ENCODE measurements at regions of chr19 and their contacts with region 1.

Region 1: GRCh38 chr19:51570962-51571575 is at the start of gene ZNF175:
- DNase-seq: peak; percentile 68
- ATAC-seq: peak; percentile 93
- H3K4me3 Mint-ChIP-seq: peak within 1 kb of the TSS; percentile 96
- H3K27ac Mint-ChIP-seq: peak within 1 kb of the TSS; percentile 86
- H3K4me1 Mint-ChIP-seq: peaks cover 38% of the 10 kb centered on the region
- H3K27me3 Mint-ChIP-seq: no peaks in the 10 kb centered on the region
- CTCF ChIP-seq: no peak
- total RNA-seq, gene ZNF175: 20.6 and 23.6 TPM in 2 replicates

Region 2: DNA sequence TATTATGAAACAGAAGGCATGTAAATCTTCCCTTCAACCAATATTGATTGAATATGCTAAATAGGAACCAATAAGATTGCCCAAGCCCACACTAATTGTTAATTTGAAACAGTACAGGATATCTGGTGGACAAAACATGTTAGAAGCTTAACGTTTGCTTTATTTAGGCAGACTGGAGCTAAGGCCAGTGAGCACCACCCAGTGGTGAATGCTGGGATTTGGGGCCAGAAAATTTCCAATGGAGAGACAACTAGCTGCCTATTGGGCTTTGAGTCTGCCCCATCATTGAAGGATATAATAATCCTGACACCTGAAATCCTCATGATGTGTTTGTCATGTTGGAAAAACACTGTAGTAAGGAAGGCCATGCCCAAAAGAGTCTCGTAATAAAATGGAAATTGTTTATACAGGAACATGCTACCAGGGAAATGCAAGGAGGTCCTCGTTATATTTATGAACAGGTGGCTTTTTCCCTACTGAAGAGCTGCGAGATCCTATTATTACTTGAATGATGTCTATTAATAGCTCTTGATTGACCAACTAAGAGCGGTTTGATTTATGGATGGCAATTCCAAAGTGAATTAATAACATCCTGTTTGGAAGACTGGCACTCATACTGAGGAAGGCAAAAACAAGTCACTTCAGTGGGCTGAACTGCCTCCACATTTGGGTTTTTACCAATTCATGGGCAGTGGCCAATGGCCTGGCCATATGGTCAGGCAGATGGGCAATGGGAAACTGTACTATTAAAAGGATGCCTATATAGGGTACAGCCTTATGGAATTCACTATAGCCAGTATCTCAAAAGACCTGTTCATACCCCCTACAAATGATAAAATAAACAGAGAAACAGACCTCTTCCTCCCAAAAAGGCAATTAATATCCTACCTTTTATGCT is 311.5 kb before region 1 on chr19:
- CTCF ChIA-PET with region 1: no interaction called
- POLR2A ChIA-PET with region 1: no interaction called
- intact Hi-C with region 1: no loop called
- DNase-seq: no peak
- ATAC-seq: no peak
- H3K4me3 Mint-ChIP-seq: no peak overlapping the region
- H3K27ac Mint-ChIP-seq: no peak overlapping the region
- H3K4me1 Mint-ChIP-seq: peaks cover 7% of the 10 kb centered on the region
- H3K27me3 Mint-ChIP-seq: peaks cover 19% of the 10 kb centered on the region
- CTCF ChIP-seq: no peak

Region 3: GRCh38 chr19:51501594-51502263 is 69.3 kb before region 1 on chr19 and contains the start of gene SIGLEC12:
- CTCF ChIA-PET with region 1: no interaction called
- POLR2A ChIA-PET with region 1: no interaction called
- intact Hi-C with region 1: no loop called
- DNase-seq: no peak
- ATAC-seq: peak; percentile 14
- H3K4me3 Mint-ChIP-seq: peak within 1 kb of the TSS; percentile 39
- H3K27ac Mint-ChIP-seq: no peak within 1 kb of the TSS
- H3K4me1 Mint-ChIP-seq: peaks cover 11% of the 10 kb centered on the region
- H3K27me3 Mint-ChIP-seq: no peaks in the 10 kb centered on the region
- CTCF ChIP-seq: no peak
- total RNA-seq, gene SIGLEC12: not detected in 2 replicates

Region 4: DNA sequence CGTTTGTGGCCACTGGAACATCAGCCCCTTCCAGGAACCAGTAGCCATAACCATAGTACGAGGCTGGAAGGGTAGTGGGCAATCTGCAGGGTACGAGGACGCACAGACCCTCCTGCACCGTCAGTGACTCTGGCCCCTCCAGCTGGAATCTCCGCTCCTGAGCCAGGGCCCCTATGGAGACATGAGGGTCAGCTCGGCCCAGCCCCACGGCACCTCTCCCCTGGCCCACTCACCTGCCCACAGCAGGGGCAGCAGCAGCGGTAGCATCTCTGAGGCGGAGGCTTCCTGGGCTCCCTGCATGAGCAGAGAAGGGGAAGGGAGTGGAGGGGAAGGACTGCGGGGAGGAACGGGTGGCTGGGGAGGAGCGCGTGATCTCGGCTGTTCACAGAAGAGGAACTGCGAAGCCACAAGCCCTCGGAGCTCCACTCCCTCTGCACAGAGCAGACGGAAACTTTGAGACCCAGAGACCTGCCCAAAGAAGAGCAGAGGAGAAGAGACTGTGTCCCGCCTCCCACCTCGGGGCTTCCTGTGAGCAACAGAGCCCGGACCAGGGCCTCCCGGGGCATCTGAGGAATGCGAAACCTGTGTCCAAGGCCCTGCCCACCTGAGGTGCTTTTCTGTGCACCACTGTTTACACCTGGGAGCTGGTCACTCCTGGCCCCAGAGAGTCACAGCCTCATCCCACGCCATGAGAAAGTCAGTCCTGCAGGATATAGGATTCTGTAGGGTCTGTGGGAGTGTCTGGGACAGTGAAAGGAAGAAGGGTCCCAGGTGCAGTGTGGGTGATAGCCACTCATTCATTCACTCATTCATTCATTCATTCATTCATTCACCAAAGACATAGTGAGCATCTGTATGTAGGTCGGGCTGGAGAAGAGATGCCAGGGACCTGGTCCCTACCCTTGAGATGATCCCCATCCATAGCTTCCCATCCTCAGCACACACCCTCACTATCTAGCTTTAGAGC is 39.4 kb before region 1 on chr19 and contains the start of gene SIGLEC6:
- CTCF ChIA-PET with region 1: no interaction called
- POLR2A ChIA-PET with region 1: interaction called, 3 read pairs
- intact Hi-C with region 1: loop called (anchors 1 kb)
- DNase-seq: peak; percentile 60
- ATAC-seq: peak; percentile 97
- H3K4me3 Mint-ChIP-seq: peak within 1 kb of the TSS; percentile 83
- H3K27ac Mint-ChIP-seq: peak within 1 kb of the TSS; percentile 83
- H3K4me1 Mint-ChIP-seq: peaks cover 88% of the 10 kb centered on the region
- H3K27me3 Mint-ChIP-seq: no peaks in the 10 kb centered on the region
- CTCF ChIP-seq: no peak
- total RNA-seq, gene SIGLEC6: 16.4 and 28.7 TPM in 2 replicates

Region 5: DNA sequence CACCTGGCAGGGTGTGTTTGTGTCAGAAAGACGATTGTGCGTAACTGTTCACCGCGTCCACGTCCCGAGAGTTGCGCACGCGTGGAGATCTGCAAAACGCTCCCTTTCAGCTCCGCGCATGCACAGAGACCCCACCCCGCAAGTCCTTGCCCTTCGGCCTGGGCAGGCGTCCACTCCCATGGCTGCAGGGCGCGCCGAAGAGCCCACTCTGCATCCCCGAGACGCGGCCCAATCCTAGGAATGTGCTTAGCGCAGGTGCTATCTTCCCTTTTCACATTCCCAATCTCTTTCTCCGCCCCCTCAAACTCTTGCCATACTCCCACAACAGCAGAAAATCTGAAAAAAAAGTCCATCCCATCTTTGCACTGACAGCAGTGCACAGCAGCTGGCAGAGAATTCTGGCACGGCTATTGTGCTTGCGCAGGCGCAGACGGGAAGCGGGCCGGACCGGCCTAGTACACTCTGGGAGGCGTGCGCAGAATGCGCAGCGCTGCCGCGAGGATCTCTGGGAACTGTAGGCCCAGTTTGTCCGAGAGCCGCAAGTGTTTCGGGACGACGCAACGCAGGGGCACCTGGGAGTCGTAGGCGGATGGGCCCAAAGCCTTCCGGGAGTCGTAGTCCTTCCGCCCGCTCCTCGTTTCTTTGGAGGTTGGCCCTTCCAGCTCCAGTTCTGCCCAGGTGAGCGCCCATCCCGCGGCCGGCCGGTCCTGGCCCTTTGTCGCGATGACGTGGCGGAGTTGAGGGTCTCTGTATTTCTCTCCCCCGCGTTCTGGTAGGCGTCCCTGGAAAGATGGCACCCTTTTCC is 23.1 kb after region 1 on chr19:
- CTCF ChIA-PET with region 1: no interaction called
- POLR2A ChIA-PET with region 1: interaction called, 4 read pairs
- intact Hi-C with region 1: loop called (anchors 1 kb)
- DNase-seq: peak; percentile 93
- ATAC-seq: peak; percentile 100
- H3K4me3 Mint-ChIP-seq: peak overlapping the region; percentile 96
- H3K27ac Mint-ChIP-seq: peak overlapping the region; percentile 90
- H3K4me1 Mint-ChIP-seq: peaks cover 27% of the 10 kb centered on the region
- H3K27me3 Mint-ChIP-seq: no peaks in the 10 kb centered on the region
- CTCF ChIP-seq: no peak